Activated T-helper 1 cell treated with anti-CD3 and anti-CD28 coated beads, Interleukin-12 subunit alpha, Interleukin-12 subunit beta, Interleukin-2, Interleukin-4 antibody, amounts not matched to agents 30 ng/mL and 10 ng/mL and 1 ng/mL, durations not matched to agents 14 hours and 24 hours and 36 hours (primary cell): ENCODE measurements at regions of chr20 and their contacts with region 1.

Region 1: GRCh38 chr20:49821870-49822331 is 9.3 kb downstream of the SLC9A8 start:
- DNase-seq: no peak
- H3K4me3 Mint-ChIP-seq: peak overlapping the region; percentile 40
- H3K27ac Mint-ChIP-seq: peak overlapping the region; percentile 21
- H3K4me1 Mint-ChIP-seq: peaks cover 63% of the 10 kb centered on the region
- H3K27me3 Mint-ChIP-seq: no peaks in the 10 kb centered on the region

Region 2: GRCh38 chr20:49713753-49714712 is 107.9 kb before region 1 on chr20 and contains the start of gene B4GALT5:
- intact Hi-C with region 1: loop called (anchors 2 kb)
- DNase-seq: peak; percentile 60
- H3K4me3 Mint-ChIP-seq: peak within 1 kb of the TSS; percentile 92
- H3K27ac Mint-ChIP-seq: peak within 1 kb of the TSS; percentile 94
- H3K4me1 Mint-ChIP-seq: peaks cover 49% of the 10 kb centered on the region
- H3K27me3 Mint-ChIP-seq: peaks cover 5% of the 10 kb centered on the region
- total RNA-seq, gene B4GALT5: 38.9 and 39.3 TPM in 2 replicates

Region 3: DNA sequence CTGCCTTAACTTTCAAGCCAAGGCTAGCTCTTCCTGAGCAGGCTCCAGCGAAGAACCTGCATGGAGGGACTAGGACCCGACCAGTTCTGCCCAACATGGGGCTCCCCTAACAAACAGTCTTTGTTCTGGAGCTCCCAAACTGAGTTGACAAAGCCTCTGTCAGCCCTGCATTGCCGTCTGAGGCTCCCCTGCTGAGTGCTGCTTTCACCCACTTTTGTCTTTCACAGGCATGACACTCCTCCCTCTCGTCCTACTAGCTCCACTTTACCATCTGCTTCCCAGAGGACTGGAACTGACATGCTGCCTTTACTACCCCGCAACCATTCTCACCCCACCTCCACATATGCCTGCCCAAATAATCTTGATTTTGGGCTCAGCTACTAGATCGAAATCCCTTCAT is 63.1 kb before region 1 on chr20:
- intact Hi-C with region 1: no loop called
- DNase-seq: no peak
- H3K4me3 Mint-ChIP-seq: no peak overlapping the region
- H3K27ac Mint-ChIP-seq: no peak overlapping the region
- H3K4me1 Mint-ChIP-seq: no peaks in the 10 kb centered on the region
- H3K27me3 Mint-ChIP-seq: peaks cover 64% of the 10 kb centered on the region

Region 4: GRCh38 chr20:49775229-49775693 is 46.6 kb before region 1 on chr20:
- intact Hi-C with region 1: loop called (anchors 1 kb)
- DNase-seq: no peak
- H3K4me3 Mint-ChIP-seq: no peak overlapping the region
- H3K27ac Mint-ChIP-seq: peak overlapping the region; percentile 1
- H3K4me1 Mint-ChIP-seq: peaks cover 32% of the 10 kb centered on the region
- H3K27me3 Mint-ChIP-seq: peaks cover 5% of the 10 kb centered on the region

Region 5: DNA sequence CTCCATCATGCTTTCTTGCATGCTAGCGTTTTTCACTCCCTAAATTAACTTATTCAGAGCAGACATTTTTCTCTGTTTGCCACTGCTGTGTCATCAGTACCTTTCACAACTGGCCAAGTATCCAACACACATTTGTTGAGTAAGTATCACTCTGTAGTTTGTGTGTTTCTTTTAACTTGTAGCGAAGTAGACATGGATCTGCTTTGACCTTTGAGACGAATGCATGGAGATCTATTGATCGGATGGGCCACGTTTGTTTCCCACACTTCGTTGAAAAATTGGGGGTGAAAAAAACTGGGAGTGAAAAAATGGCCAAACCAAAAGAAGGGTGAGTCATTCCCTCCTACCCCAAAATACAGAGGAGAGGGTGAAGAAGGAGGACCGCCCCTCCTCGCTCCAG is 22.2 kb before region 1 on chr20:
- intact Hi-C with region 1: no loop called
- DNase-seq: no peak
- H3K4me3 Mint-ChIP-seq: no peak overlapping the region
- H3K27ac Mint-ChIP-seq: no peak overlapping the region
- H3K4me1 Mint-ChIP-seq: peaks cover 53% of the 10 kb centered on the region
- H3K27me3 Mint-ChIP-seq: peaks cover 17% of the 10 kb centered on the region

Region 6: GRCh38 chr20:49948809-49949548 is 127.1 kb after region 1 on chr20:
- intact Hi-C with region 1: no loop called
- DNase-seq: no peak
- H3K4me3 Mint-ChIP-seq: no peak overlapping the region
- H3K27ac Mint-ChIP-seq: no peak overlapping the region
- H3K4me1 Mint-ChIP-seq: no peaks in the 10 kb centered on the region
- H3K27me3 Mint-ChIP-seq: no peaks in the 10 kb centered on the region